ENCODE measurements at regions of chr9 and their contacts with region 1.

Region 1: DNA sequence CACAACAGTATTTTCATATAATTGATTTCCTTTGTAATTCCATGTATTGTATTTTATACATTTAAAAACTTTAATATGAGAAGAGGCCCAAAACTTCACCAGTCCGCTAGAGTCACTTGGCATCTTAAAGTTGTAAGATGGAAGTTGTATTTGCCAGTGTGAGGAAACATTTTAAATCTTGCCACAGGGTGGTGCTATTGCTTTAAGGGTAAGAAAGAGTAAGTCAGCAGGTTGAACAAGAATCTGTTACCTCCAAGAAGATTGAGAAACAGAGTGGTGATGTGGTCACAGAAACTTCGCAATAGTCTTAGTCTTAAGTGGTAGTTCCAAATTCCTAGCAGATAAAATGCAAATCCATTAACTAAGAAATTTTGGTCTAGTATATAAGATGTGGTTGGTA is 39.8 kb upstream of the RANBP6 start:
- DNase-seq: peak; percentile 53
- H3K4me3 Mint-ChIP-seq: no peak overlapping the region
- H3K27ac Mint-ChIP-seq: no peak overlapping the region
- H3K4me1 Mint-ChIP-seq: peaks cover 5% of the 10 kb centered on the region
- H3K27me3 Mint-ChIP-seq: peaks cover 24% of the 10 kb centered on the region

Region 2: DNA sequence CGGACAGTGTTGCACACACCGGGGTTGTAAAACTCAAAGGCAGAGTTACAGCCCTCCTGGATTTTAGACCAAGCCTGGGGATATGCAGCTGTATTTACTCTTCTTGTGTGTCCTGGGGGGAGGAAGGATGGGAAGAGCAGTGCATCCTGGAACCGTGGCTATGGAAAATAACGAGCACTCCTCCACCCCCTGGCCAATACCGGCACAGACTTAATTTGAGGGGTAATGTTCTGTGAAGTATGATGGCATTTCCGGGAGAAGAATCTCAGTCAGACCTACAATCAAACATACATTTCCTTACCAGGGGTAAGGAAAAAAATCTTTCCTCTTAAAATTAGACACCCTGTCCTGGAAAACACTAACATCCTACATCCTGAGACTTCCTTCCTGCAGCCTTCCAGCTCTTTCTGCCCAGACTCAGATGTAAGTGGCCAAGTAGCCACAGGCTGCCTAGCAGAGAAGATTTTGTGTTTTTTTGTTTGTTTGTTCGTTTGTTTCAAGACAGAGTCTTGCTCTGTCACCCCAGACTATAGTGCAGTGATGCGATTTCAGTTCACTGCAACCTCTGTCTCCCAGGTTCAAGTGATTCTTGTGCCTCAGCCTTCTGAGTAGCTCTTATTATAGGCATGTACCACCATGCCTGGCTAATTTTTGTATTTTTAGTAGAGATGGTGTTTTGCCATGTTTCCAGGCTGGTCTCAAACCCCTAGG is 211.3 kb before region 1 on chr9:
- CTCF ChIA-PET with region 1: no interaction called
- DNase-seq: peak; percentile 27
- H3K4me3 Mint-ChIP-seq: peak overlapping the region; percentile 68
- H3K27ac Mint-ChIP-seq: peak overlapping the region; percentile 98
- H3K4me1 Mint-ChIP-seq: peaks cover 92% of the 10 kb centered on the region
- H3K27me3 Mint-ChIP-seq: no peaks in the 10 kb centered on the region

Region 3: DNA sequence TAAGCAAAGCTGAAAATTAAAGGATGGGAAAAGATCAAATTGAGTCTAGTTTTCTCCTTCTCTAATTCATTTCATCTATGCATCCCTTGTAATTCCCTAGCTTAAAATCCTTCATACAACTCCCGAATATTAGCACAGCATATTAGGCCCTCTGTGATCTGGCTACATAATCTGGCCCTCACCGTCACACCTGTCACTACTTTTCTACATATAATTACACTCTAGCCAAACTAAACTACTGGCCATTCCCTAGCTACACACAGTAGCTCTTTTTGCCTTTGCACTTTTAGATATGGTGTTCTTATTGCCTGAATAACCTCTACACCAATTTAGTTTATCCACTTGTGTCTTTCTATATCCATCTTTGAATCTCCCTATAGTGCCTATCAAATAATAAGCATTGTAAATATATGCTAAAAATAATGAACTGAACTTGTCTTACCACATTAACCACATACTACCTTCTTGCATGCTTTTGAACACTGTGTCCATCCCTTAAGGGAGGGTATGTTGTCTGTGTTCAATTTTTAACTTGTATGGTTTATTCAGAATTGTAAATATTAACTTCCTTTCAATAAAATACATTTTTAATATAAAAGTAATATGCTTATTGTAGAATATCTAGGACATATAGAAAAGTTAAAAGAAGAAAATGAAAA is 55.6 kb before region 1 on chr9:
- CTCF ChIA-PET with region 1: no interaction called
- DNase-seq: no peak
- H3K4me3 Mint-ChIP-seq: no peak overlapping the region
- H3K27ac Mint-ChIP-seq: no peak overlapping the region
- H3K4me1 Mint-ChIP-seq: peaks cover 27% of the 10 kb centered on the region
- H3K27me3 Mint-ChIP-seq: no peaks in the 10 kb centered on the region

Region 4: GRCh38 chr9:6068983-6069382 is 13.8 kb after region 1 on chr9:
- CTCF ChIA-PET with region 1: interaction called, 18 read pairs
- DNase-seq: peak; percentile 39
- H3K4me3 Mint-ChIP-seq: peak overlapping the region; percentile 38
- H3K27ac Mint-ChIP-seq: peak overlapping the region; percentile 90
- H3K4me1 Mint-ChIP-seq: peaks cover 24% of the 10 kb centered on the region
- H3K27me3 Mint-ChIP-seq: peaks cover 7% of the 10 kb centered on the region

Region 5: DNA sequence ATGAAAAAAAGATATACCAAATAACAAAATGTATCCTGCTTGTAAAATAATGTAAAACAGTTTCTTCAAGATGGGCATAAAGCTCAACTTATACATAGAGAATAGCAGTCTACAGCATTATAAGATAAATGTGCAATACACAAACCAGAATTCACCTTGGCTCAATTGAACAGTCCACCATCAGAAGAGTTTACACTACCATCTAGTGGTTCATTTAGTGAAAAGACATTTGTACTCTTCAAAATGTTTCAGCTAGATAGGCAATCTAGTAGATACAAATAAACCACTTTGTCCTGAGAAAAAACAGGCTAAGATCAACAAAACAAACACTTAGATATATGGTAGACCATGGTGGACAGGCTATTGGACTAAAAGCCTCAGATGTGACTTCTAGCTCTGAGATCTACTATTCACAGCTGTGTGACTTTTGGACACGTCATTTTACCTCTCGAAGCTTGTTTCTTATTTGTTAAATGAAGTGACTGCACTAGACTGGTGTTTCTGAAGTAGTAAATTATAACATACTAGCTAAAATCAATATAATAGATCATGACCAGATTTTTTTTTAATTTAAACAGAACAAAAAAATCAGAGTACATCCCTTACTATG is 250.8 kb after region 1 on chr9:
- CTCF ChIA-PET with region 1: interaction called, 29 read pairs
- DNase-seq: no peak
- H3K4me3 Mint-ChIP-seq: no peak overlapping the region
- H3K27ac Mint-ChIP-seq: no peak overlapping the region
- H3K4me1 Mint-ChIP-seq: no peaks in the 10 kb centered on the region
- H3K27me3 Mint-ChIP-seq: peaks cover 9% of the 10 kb centered on the region

Region 6: DNA sequence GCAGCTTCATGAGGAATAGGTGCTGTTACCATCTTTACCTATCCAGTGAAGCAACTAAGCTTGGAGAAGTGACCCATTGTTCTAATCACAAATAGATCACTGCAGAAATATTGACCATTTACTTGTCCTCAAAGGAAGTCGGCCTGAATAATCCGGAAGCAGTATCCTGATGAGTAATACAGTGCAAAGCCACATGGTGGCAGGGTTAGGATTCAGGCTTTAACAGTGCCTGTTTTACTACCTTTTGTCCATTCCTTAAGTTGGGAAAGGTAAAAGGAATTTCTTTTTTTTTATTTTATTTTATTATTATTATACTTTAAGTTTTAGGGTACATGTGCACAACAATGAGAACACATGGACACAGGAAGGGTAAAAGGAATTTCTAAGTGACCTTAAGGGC is 1038.8 kb after region 1 on chr9:
- CTCF ChIA-PET with region 1: no interaction called
- DNase-seq: no peak
- H3K4me3 Mint-ChIP-seq: no peak overlapping the region
- H3K27ac Mint-ChIP-seq: no peak overlapping the region
- H3K4me1 Mint-ChIP-seq: peaks cover 4% of the 10 kb centered on the region
- H3K27me3 Mint-ChIP-seq: no peaks in the 10 kb centered on the region